ENCODE measurements at regions of chr4 and their contacts with region 1.

Region 1: DNA sequence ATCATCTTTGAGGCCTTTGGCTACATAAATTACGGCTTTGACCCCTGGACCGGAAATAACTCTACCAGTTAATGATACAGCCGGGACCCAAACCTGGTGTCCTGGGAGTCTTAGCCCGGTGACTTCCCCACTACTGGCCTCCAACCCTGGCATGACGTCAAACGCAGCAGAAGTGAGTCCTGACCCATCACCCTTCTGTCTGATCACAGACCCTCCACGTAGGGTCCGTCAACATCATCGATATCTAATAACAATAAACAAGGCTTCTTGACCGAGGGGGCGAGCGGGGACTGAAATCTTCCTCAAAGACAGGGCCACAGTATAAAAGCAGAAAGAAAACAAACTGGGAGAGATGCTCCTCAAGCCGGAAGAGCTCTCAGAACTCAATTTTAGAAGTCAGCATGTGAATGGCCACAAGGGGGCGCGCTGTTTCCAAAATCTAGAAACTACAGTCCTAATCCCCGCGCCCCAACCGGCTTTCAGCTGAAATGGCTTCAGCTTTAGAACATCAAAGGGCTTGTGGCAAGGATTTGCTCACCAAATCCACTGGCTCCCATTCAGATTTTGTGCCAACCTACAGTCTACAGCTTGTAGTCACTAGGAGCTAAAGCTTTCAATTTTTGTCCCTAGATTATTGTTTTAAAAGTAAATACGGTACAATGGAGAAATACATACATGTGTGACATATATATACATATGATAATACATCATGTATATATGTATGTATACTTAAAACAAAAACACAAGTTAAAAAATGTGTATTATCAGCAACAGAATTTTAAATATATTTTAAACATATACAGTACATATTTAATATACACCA is 46.4 kb upstream of the ENPP6 start:
- DNase-seq: no peak
- ATAC-seq: peak; percentile 45
- H3K4me3 ChIP-seq: peak overlapping the region; percentile 63
- H3K27ac ChIP-seq: peak overlapping the region; percentile 72
- H3K4me1 ChIP-seq: peaks cover 39% of the 10 kb centered on the region
- H3K27me3 ChIP-seq: no peaks in the 10 kb centered on the region
- CTCF ChIP-seq: peak; percentile 67 to 89 (median 86)
- EP300 ChIP-seq: no peak
- POLR2A ChIP-seq: 0 out of 2 replicates have a peak, but pooled peaks have one; percentile 37
- RAD21 ChIP-seq: peak; percentile 91

Region 2: DNA sequence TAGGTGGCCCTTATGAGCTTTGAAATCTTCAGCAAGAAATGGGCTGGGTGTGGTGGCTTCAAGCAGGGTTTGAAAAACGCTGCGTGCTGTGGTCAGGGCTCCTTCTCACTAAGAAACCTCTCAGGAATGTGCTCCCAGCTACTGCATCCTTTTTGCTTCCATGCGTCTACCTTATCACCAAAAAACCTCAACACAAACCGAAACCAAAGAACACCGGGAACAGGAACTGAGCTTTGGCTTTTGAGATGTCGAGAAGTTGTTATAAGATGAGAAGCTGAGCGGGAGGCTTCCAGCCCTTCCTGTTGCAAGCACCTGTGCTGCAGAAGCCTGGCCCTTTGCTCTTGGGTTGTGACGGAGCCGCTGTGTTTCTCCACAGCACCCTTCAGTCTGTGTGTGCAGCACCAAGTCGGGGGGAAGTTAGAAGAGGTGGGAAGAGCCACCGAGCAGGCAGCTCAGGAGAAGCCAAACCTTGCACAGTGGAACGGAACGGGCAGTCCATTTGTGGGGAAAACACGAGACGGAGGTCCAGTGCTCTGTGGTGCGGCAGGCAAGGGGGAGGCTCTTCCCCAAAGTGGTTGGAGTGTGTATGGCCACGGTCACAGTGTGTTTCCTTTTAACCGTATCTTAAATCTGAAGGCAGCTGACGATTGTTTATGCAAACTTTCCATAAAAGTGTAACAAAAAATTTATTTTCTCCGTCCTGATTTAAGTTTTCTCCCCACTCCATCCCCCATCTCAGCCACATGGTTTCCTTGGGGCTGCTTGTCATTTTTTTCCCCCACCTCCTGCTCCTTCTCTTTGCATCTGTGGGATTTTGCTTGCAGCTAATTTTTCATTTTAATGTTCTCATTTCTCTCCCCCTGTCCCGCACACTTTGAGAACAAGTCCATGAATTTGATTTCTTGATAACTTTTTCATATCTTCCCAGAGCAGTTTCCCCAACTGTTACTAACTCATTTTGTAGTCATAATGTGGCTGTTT is 235.4 kb before region 1 on chr4:
- CTCF ChIA-PET with region 1: no interaction called
- POLR2A ChIA-PET with region 1: no interaction called
- RAD21 ChIA-PET with region 1: no interaction called
- SMC1A ChIA-PET with region 1: no interaction called
- in situ Hi-C with region 1: no loop called
- intact Hi-C with region 1: no loop called
- DNase-seq: no peak
- ATAC-seq: no peak; the same call in 2 of the 3 replicates
- H3K4me3 ChIP-seq: no peak overlapping the region
- H3K27ac ChIP-seq: no peak overlapping the region
- H3K4me1 ChIP-seq: no peaks in the 10 kb centered on the region
- H3K27me3 ChIP-seq: peaks cover 0 to 2% of the 10 kb centered on the region in 2 experiments; a peak in 2 of 4 replicates
- CTCF ChIP-seq: no peak
- EP300 ChIP-seq: no peak
- POLR2A ChIP-seq: no peak
- RAD21 ChIP-seq: no peak

Region 3: DNA sequence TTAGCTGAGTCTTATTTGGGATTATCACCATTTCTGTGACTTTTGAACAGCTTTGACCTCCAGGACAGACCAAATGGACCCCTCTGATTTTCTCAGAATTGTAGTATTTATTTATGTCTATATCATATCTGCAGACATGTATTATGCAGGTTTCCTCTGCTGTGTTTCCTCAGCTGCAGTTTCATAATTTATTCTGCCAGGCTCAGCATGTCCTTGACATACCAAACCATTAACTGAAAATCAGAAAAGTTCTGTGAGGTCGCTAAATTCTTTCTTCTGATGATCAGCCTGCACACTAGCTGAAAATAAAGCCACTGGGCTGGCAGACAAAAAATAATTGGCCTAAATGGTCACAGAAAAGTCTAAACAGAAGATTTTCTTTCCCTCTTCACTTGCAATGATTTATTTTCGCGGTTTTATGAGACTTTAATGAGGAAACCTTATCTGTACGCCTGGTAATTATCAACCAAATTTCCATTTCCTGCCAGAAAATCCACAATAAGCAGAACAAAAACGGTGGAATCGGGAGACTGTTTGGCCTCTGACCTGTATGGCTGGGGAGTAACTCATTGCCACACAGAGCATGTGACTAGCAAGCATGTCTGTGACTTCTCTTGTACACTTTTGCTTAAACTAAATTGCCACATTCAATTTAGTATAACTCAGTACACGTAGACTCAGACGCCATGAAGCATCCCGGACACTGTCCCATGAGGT is 197.4 kb before region 1 on chr4:
- CTCF ChIA-PET with region 1: no interaction called
- POLR2A ChIA-PET with region 1: no interaction called
- RAD21 ChIA-PET with region 1: no interaction called
- SMC1A ChIA-PET with region 1: no interaction called
- in situ Hi-C with region 1: no loop called
- intact Hi-C with region 1: no loop called
- DNase-seq: no peak
- ATAC-seq: no peak
- H3K4me3 ChIP-seq: no peak overlapping the region
- H3K27ac ChIP-seq: no peak overlapping the region
- H3K4me1 ChIP-seq: no peaks in the 10 kb centered on the region
- H3K27me3 ChIP-seq: no peaks in the 10 kb centered on the region; a peak in 2 of 4 replicates
- CTCF ChIP-seq: no peak
- EP300 ChIP-seq: no peak
- POLR2A ChIP-seq: no peak
- RAD21 ChIP-seq: no peak

Region 4: DNA sequence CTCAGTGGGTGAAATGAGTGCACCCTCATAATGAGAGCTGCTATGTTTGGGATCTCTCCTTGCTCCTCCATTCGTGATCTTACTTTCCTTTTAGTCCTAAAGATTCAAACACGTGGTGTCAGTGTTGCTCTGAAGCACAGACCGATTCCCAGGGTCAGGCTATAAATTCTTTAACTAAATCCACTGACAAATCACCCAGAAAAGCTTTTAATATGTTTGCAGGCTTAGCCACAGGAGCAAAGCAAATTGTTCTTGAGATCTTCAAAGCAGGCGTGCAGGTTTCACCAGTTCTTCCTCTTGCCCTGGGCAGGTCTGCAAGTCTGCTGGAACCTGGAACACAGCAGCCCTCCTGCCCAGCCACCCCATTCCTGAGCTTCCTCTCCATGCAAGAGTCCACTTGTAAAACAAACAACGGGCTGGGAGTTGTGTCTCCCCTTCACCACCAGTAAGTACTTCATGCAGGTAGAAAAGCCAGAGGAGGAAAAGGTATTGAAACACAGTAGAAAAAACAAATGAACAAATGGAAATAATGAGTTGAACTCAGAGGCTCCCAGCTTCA is 23.7 kb after region 1 on chr4:
- CTCF ChIA-PET with region 1: interaction called, 348 read pairs
- POLR2A ChIA-PET with region 1: interaction called, 250 read pairs
- RAD21 ChIA-PET with region 1: interaction called, 367 read pairs
- SMC1A ChIA-PET with region 1: interaction called, 428 read pairs
- in situ Hi-C with region 1: no loop called
- intact Hi-C with region 1: no loop called
- DNase-seq: no peak
- ATAC-seq: peak; percentile 4; the same call in 1 of the 3 replicates
- H3K4me3 ChIP-seq: peak overlapping the region; percentile 55
- H3K27ac ChIP-seq: peak overlapping the region; percentile 99
- H3K4me1 ChIP-seq: peaks cover 64% of the 10 kb centered on the region
- H3K27me3 ChIP-seq: no peaks in the 10 kb centered on the region
- CTCF ChIP-seq: peak in 2 of 3 experiments; percentile 13 to 27; a peak in 3 of 6 replicates
- EP300 ChIP-seq: no peak
- POLR2A ChIP-seq: 0 out of 2 replicates have a peak, but pooled peaks have one; percentile 20
- RAD21 ChIP-seq: peak; percentile 53

Region 5: DNA sequence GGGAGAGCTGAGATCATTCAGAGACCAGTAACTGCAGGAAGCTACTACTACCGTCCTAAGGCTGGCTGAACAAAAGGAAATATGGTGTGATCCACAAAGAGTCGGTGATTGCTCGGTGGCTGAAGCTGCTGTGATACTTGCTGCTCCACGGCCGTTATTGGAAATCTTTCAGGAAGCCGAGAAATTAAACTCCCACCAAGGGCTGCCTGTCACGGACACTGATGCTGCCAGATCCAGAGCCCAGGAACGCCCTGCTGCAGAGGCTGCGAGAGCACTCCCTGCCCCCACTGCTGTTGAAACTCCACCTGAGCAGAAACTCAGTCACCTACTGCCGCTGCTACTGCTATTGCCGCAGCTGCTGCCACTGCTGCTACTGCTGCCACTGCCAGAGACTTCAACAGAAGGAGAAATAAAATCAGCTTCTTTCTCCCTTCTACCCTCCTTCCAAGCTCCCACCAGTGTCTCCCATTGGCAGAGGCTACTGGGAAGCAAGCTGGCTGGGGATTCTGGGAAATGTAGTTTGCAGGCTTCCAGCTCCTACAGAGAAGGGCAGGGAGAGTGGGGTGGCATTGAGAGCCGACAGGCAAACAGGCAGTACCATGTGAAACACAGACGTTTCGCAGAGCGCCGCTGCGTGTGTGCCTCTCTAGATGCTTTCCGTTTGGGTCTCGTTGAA is 79.5 kb after region 1 on chr4:
- CTCF ChIA-PET with region 1: interaction called, 41 read pairs
- POLR2A ChIA-PET with region 1: interaction called, 227 read pairs
- RAD21 ChIA-PET with region 1: interaction called, 253 read pairs
- SMC1A ChIA-PET with region 1: interaction called, 305 read pairs
- in situ Hi-C with region 1: no loop called
- intact Hi-C with region 1: loop called (anchors 1 kb)
- DNase-seq: peak; percentile 69
- ATAC-seq: peak; percentile 51
- H3K4me3 ChIP-seq: peak overlapping the region; percentile 55
- H3K27ac ChIP-seq: peak overlapping the region; percentile 86
- H3K4me1 ChIP-seq: peaks cover 52% of the 10 kb centered on the region
- H3K27me3 ChIP-seq: no peaks in the 10 kb centered on the region
- CTCF ChIP-seq: no peak
- EP300 ChIP-seq: peak in 1 of 2 experiments; percentile 14; a peak in 1 of 4 replicates
- POLR2A ChIP-seq: peak; percentile 72
- RAD21 ChIP-seq: no peak

Region 6: GRCh38 chr4:184395971-184396391 is 131.9 kb after region 1 on chr4:
- CTCF ChIA-PET with region 1: interaction called, 6 read pairs
- POLR2A ChIA-PET with region 1: no interaction called
- RAD21 ChIA-PET with region 1: interaction called, 10 read pairs
- SMC1A ChIA-PET with region 1: interaction called, 8 read pairs
- in situ Hi-C with region 1: no loop called
- intact Hi-C with region 1: loop called (anchors 5 kb)
- DNase-seq: peak; percentile 81
- ATAC-seq: peak; percentile 89
- H3K4me3 ChIP-seq: peak overlapping the region; percentile 29
- H3K27ac ChIP-seq: peak overlapping the region; percentile 76
- H3K4me1 ChIP-seq: peaks cover 29% of the 10 kb centered on the region
- H3K27me3 ChIP-seq: no peaks in the 10 kb centered on the region
- CTCF ChIP-seq: no peak
- EP300 ChIP-seq: no peak
- POLR2A ChIP-seq: peak; percentile 63; the same call in 1 of the 2 replicates
- RAD21 ChIP-seq: no peak

Region 7: DNA sequence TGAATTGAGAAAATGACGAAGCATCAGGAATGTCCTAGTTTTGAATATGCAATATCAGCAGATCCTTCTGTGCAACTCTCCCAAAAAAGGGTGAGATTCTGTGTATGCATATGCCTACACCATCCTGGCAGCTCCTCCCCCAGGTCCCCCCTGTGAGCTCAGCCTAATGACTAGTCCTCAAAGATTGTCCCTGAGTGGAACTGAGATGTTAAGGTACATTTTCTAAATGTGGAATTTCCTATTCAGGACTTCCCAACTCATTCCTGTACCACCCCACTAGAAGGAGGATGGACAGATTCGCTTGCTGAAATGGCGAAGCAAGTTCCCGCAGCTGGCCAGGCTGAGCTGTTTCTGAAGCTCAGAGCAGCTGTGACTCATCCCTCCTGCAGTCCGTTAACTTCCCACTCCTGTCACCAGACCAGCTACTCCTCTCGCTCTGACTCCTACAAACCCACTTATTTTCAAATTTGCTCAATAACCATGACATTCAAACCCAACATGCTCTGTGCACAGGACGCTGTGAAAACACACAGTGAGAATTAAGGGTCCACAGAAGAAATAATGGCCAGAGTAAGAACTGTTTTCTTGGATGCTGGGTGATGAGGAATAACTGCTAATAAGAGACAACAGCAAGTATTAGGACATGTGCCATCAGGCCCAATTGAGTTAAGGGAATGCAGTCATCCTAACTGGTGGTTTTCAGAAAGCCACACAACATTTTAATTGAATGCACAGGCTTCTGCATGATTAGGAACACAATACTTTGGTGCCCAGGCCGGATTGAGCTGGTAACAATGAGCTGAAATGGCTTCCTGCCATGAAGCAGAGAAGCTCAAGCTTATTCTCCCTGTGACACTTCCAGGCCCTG is 250.2 kb after region 1 on chr4:
- CTCF ChIA-PET with region 1: interaction called, 6 read pairs
- POLR2A ChIA-PET with region 1: interaction called, 9 read pairs
- RAD21 ChIA-PET with region 1: interaction called, 23 read pairs
- SMC1A ChIA-PET with region 1: interaction called, 31 read pairs
- in situ Hi-C with region 1: no loop called
- intact Hi-C with region 1: no loop called
- DNase-seq: peak; percentile 94
- ATAC-seq: peak; percentile 96
- H3K4me3 ChIP-seq: peak overlapping the region; percentile 42
- H3K27ac ChIP-seq: peak overlapping the region; percentile 70
- H3K4me1 ChIP-seq: peaks cover 32% of the 10 kb centered on the region
- H3K27me3 ChIP-seq: no peaks in the 10 kb centered on the region
- CTCF ChIP-seq: no peak
- EP300 ChIP-seq: peak; percentile 99 to 100
- POLR2A ChIP-seq: 0 out of 2 replicates have a peak, but pooled peaks have one; percentile 30
- RAD21 ChIP-seq: no peak

Region 8: GRCh38 chr4:184649026-184649970 is 385.2 kb after region 1 on chr4 and contains the starts of genes CASP3 and PRIMPOL:
- CTCF ChIA-PET with region 1: interaction called, 12 read pairs
- POLR2A ChIA-PET with region 1: interaction called, 3 read pairs
- RAD21 ChIA-PET with region 1: interaction called, 23 read pairs
- SMC1A ChIA-PET with region 1: interaction called, 9 read pairs
- in situ Hi-C with region 1: no loop called
- intact Hi-C with region 1: loop called (anchors 1 kb)
- DNase-seq: peak; percentile 60
- ATAC-seq: peak; percentile 90
- H3K4me3 ChIP-seq: peak within 1 kb of the TSS; percentile 98
- H3K27ac ChIP-seq: peak within 1 kb of the TSS; percentile 85
- H3K4me1 ChIP-seq: peaks cover 12% of the 10 kb centered on the region; the same call in 1 of the 2 replicates
- H3K27me3 ChIP-seq: no peaks in the 10 kb centered on the region
- CTCF ChIP-seq: peak in 2 of 3 experiments; percentile 26 to 43; a peak in 3 of 6 replicates
- EP300 ChIP-seq: no peak
- POLR2A ChIP-seq: peak; percentile 93
- RAD21 ChIP-seq: peak; percentile 28
- polyA plus RNA-seq, gene CASP3: 50.0 to 59.0 TPM
- polyA plus RNA-seq, gene PRIMPOL: 10.6 to 11.5 TPM

Region 9: DNA sequence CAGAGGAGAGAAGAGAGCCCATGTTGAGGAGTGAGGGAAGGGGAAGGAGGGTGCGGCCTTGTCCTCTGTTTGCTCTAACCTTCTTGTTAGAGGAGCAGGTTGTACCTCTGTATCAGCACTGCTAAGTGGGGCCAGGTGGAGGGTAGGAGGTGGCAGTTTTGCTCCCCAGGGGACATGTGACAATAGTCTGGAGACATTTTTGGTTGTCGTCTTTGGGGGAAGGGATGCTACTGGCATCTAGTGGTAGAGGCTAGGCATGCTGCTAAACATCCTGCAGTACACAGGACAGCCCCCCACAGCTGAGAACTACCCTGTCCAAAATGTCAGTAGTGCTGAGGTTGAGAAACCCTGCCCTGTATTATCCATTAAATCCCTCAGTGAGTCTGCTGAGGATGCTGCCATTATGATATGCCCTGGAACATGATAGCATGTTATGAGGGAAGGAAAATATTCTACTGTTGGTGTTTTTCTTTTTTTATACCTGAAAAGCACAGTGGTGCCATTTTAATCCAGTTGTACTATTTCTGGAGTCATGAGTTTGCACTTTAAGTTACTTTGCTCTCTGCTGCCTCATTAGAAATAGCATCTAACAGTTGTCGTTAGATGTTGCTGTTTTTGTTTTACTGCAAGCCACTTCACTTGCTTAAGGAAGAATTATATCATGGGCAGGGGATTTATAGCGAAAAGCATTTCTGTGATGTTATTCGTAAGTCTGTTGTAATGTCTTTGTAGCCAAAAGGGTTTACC is 1041.0 kb after region 1 on chr4:
- CTCF ChIA-PET with region 1: interaction called, 3 read pairs
- POLR2A ChIA-PET with region 1: interaction called, 3 read pairs
- RAD21 ChIA-PET with region 1: no interaction called
- SMC1A ChIA-PET with region 1: no interaction called
- in situ Hi-C with region 1: no loop called
- intact Hi-C with region 1: loop called (anchors 5 kb)
- DNase-seq: peak; percentile 68
- ATAC-seq: peak; percentile 73
- H3K4me3 ChIP-seq: no peak overlapping the region
- H3K27ac ChIP-seq: peak overlapping the region; percentile 99
- H3K4me1 ChIP-seq: peaks cover 59% of the 10 kb centered on the region
- H3K27me3 ChIP-seq: no peaks in the 10 kb centered on the region
- CTCF ChIP-seq: peak; percentile 70 to 79 (median 73)
- EP300 ChIP-seq: no peak
- POLR2A ChIP-seq: no peak
- RAD21 ChIP-seq: peak; percentile 83